Spleen (tissue), 13 donors: ENCODE measurements at regions of chr5 and their contacts with region 1.

Region 1: GRCh38 chr5:88729084-88729828 is 153.7 kb downstream of the MEF2C start:
- DNase-seq: no peak
- H3K4me3 ChIP-seq: no peak overlapping the region
- H3K27ac ChIP-seq: peak overlapping the region in 1 of 8 donors; percentile 31
- H3K4me1 ChIP-seq: peaks cover 5 to 54% (median 40%) of the 10 kb centered on the region in 6 donors
- H3K27me3 ChIP-seq: no peaks in the 10 kb centered on the region
- CTCF ChIP-seq: peak; percentile 70 to 89 (median 83)
- POLR2A ChIP-seq: no peak

Region 2: GRCh38 chr5:88833371-88834130 is 104.3 kb after region 1 on chr5:
- intact Hi-C with region 1: loop called (anchors 10 kb)
- DNase-seq: peak; percentile 52
- H3K4me3 ChIP-seq: peak overlapping the region in 2 of 8 donors; percentile 10 to 14
- H3K27ac ChIP-seq: peak overlapping the region; percentile 44 to 91 (median 76)
- H3K4me1 ChIP-seq: peaks cover 24 to 100% (median 75%) of the 10 kb centered on the region in 6 donors
- H3K27me3 ChIP-seq: no peaks in the 10 kb centered on the region
- CTCF ChIP-seq: no peak
- POLR2A ChIP-seq: no peak

Region 3: GRCh38 chr5:88883059-88883835 is 154.0 kb after region 1 on chr5 and contains the start of gene MEF2C:
- intact Hi-C with region 1: loop called (anchors 10 kb)
- DNase-seq: peak; percentile 91
- H3K4me3 ChIP-seq: peak within 1 kb of the TSS; percentile 52 to 87 (median 66)
- H3K27ac ChIP-seq: peak within 1 kb of the TSS; percentile 86 to 94 (median 92)
- H3K4me1 ChIP-seq: peaks cover 16 to 80% (median 51%) of the 10 kb centered on the region in 6 donors
- H3K27me3 ChIP-seq: no peaks in the 10 kb centered on the region
- CTCF ChIP-seq: no peak
- POLR2A ChIP-seq: peak; percentile 43 to 97 (median 75)
- total RNA-seq, gene MEF2C: 94.4 to 153 (median 129) TPM

Region 4: DNA sequence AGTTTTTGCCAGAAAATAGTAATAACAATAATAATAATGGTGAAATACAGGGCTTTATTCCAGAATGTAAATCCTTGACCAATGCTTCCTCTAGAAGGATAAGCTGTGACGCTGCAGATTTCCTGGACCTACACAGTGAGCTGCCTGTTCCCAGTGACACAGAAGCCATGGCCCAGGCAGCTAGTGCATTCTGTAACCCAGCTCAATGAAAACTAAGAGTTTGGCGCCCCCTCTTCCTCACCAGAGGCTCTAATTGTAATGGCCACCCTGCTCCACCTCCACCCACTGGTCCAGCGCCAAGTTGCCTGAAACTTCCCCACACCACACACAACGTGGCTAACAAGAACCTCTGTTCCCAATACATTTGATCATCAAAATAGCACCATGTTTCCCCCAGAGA is 1432.2 kb after region 1 on chr5:
- intact Hi-C with region 1: loop called (anchors 10 kb)
- DNase-seq: peak; percentile 78
- H3K4me3 ChIP-seq: no peak overlapping the region
- H3K27ac ChIP-seq: no peak overlapping the region
- H3K4me1 ChIP-seq: peaks cover 0 to 9% (median 0%) of the 10 kb centered on the region in 6 donors
- H3K27me3 ChIP-seq: no peaks in the 10 kb centered on the region
- CTCF ChIP-seq: peak in 3 of 11 experiments; percentile 18 to 29 (median 27)
- POLR2A ChIP-seq: no peak

Region 5: DNA sequence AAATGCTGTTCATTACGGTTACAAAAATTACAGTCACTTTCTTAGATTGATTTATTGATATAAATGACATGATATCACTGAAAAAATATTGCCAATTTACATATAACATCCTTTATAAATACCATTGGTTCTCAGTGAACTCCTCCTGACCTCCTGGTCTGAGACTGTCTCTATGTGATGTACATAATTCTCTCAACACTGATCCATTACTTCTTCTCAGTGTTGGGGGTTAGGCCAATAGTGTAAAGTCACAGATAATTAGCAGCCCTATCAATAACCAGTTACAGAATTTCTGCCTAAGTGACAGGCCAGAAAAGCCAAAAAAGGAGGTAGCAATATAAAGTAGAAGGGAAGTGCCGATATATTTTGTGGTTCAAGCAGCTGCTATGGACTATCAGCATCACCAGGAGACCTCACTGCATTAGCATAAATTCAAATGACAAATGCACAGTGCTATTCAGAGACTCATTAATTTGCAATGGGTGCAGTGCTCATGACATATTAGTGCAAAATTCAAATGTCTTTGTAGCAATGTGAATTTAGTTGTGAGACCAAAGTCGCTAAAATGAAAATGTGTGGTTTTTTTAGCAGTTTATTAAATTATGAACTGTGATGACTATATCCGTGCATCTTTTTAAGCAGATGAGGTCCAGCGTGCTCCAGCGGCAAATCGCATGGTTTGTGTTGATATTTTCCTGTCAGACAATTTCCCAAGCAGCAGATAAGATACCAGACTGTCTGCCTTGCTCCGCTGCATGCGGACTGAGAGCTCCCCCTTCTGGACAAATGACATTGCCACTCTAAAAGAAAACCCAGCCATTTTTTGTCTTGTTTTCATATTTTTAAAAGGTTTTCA is 1535.7 kb after region 1 on chr5:
- intact Hi-C with region 1: loop called (anchors 10 kb)
- DNase-seq: peak; percentile 79
- H3K4me3 ChIP-seq: no peak overlapping the region
- H3K27ac ChIP-seq: no peak overlapping the region
- H3K4me1 ChIP-seq: peaks cover 0 to 8% (median 1%) of the 10 kb centered on the region in 6 donors
- H3K27me3 ChIP-seq: no peaks in the 10 kb centered on the region
- CTCF ChIP-seq: peak; percentile 36 to 85 (median 62)
- POLR2A ChIP-seq: no peak